Activated CD8-positive, alpha-beta T cell treated with anti-CD3 and anti-CD28 coated beads for 36 hours (primary cell): ENCODE measurements at regions of chr1 and their contacts with region 1.

Region 1: DNA sequence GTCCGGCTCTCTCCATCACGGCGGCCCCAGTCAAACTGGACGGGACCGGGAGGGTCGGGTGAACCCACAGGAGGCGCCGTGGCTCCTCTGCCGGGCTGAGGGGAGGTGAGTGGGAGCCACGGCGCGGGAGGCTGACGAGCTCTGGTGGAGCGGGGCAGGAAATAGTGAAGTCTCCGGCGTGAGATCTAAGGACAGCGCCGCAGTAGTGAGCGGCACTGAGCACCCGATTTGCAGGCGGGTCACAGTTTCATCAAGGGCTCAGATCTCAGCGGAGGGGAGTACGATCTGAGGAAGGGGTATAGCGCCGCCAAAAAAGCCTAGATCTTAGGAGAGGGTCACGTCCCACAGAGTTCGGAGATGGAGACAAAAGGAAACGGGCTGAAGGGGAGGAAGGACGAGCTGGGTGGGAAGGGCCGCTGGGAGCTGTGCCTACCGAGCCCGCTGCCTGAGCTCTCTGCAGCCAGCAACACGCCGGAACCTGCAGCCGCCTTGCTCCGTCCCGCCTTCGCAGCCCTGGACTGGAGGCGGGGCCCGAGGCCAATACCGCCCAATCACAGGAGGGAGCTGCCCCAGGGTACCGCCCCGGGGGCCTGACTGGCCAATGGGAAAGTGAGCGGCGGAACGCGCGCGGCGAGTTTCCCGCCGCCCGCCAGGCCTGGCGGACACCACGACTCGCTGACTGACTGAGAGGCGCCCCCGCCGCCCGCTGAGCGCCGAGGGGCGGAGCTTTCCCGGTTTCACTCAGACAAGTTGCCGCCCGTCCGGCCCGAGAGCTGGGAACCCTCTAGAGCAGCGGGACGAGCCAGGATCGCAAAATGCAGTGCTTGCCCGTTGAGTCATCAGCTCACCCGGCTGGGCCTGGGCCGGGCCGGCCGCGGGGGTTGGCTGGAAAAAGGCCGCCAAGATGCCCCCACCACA is 1.9 kb downstream of the SFN start:
- DNase-seq: peak; percentile 95
- ATAC-seq: peak; percentile 94
- H3K4me3 Mint-ChIP-seq: peak overlapping the region; percentile 89
- H3K27ac Mint-ChIP-seq: peak overlapping the region; percentile 87
- H3K4me1 Mint-ChIP-seq: peaks cover 20% of the 10 kb centered on the region
- H3K27me3 Mint-ChIP-seq: no peaks in the 10 kb centered on the region
- CTCF ChIP-seq: no peak

Region 2: DNA sequence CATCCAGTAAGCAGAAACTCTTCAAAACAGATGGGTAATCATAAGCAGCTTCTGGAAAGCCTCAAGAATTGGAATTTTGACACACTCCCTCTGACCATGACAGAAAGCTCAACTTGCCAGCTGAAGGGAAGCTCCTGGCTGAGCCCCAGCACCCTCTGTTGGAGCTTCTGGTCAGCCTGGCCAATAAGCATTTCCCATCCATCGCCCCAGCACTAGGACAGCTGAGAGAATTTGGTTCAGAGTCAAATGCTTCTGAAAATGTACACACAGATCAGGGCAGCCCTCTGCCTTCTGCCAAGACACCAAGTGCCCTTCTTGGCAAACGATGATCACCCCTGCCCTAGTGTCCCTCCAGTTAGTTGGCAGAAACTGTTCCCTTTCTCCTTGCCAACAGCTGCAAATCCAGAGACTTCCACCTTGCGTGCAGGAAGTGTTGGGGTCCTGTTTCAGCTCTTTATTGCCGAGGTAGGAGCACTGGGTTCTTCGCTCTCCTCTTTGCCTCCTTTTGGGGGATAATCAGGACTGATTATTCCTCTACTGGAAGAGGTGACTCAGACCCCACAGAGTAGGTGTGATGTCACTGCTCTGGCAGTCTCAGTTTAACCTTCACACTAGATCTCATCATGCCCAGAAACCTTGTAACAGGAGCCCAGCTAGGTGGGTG is 65.3 kb before region 1 on chr1:
- CTCF ChIA-PET with region 1: interaction called, 3 read pairs
- POLR2A ChIA-PET with region 1: interaction called, 11 read pairs
- intact Hi-C with region 1: no loop called
- DNase-seq: peak; percentile 62
- ATAC-seq: peak; percentile 80
- H3K4me3 Mint-ChIP-seq: peak overlapping the region; percentile 64
- H3K27ac Mint-ChIP-seq: peak overlapping the region; percentile 96
- H3K4me1 Mint-ChIP-seq: peaks cover 47% of the 10 kb centered on the region
- H3K27me3 Mint-ChIP-seq: no peaks in the 10 kb centered on the region
- CTCF ChIP-seq: no peak

Region 3: DNA sequence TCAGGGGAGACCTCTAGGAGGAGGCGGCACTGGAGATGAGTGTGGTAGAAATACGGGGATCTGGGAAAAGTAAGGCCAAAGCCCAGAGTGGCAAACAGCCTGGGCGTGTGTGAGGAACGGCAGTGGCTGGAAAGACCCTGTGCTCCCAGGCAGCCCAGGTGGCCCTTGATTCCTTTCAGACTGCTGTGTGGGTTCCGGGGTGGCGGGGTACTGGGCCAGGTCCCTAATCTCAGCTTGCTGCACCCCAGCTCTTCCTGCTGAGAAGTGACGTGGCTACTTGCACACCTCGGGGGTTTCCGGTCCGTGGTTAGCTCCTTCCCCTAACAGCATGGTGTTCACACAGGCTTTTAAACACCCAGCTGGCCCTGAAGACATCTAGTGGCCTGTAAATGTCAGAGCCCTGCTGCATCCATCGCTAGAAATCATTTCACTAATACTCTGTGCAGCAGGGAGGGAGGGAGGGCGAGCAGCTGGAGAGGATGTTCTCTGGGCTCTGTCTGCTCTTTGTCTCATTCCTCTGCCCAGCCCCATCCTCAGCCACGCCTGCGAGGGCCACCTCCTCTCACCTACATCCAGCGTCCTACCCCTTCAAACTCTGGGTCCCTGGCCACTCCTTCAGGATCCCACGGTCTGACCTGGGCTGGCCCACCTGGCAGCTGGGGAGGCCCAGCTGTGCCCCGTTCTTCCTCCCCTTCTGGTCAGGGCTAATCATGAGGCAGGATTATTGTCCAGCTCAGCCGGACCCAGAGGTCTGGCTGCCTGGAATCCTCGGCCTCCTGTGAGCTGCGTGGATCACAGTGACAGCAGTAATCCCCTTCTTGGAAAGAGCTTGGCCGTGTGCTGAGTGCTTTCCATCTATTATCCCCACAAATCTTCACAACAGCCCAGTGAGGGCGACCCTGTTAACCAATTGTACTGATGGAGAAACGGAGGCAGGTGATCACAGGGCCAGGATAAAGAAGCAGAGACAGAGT is 31.1 kb before region 1 on chr1:
- CTCF ChIA-PET with region 1: interaction called, 6 read pairs
- POLR2A ChIA-PET with region 1: interaction called, 18 read pairs
- intact Hi-C with region 1: no loop called
- DNase-seq: peak; percentile 95
- ATAC-seq: peak; percentile 94
- H3K4me3 Mint-ChIP-seq: peak overlapping the region; percentile 62
- H3K27ac Mint-ChIP-seq: peak overlapping the region; percentile 98
- H3K4me1 Mint-ChIP-seq: peaks cover 67% of the 10 kb centered on the region
- H3K27me3 Mint-ChIP-seq: no peaks in the 10 kb centered on the region
- CTCF ChIP-seq: no peak

Region 4: DNA sequence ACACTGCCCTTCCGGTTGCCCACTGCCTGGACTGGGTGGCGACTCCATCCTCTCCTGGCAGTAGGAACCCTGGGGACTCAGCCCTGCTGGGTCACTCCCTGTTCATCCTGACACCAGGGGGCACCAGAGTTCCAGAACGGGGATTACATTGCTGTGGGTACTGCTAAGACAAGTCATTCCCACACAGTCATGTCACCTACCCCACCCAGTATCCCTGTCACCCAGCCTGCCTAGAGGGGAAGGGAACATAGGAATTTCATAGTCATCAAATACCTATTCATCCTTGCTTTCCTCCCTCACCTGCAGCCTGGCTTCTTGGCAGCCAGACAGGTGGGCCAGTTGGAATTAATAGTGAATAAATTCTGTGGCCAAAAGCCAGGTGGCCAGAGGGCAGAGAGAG is 11.7 kb before region 1 on chr1:
- CTCF ChIA-PET with region 1: interaction called, 7 read pairs
- POLR2A ChIA-PET with region 1: interaction called, 13 read pairs
- intact Hi-C with region 1: no loop called
- DNase-seq: peak; percentile 82
- ATAC-seq: peak; percentile 72
- H3K4me3 Mint-ChIP-seq: no peak overlapping the region
- H3K27ac Mint-ChIP-seq: no peak overlapping the region
- H3K4me1 Mint-ChIP-seq: no peaks in the 10 kb centered on the region
- H3K27me3 Mint-ChIP-seq: no peaks in the 10 kb centered on the region
- CTCF ChIP-seq: peak; percentile 76

Region 5: GRCh38 chr1:26882696-26883463 is 18.0 kb after region 1 on chr1:
- CTCF ChIA-PET with region 1: interaction called, 19 read pairs
- POLR2A ChIA-PET with region 1: interaction called, 37 read pairs
- intact Hi-C with region 1: no loop called
- DNase-seq: no peak
- ATAC-seq: no peak
- H3K4me3 Mint-ChIP-seq: no peak overlapping the region
- H3K27ac Mint-ChIP-seq: peak overlapping the region; percentile 7
- H3K4me1 Mint-ChIP-seq: peaks cover 3% of the 10 kb centered on the region
- H3K27me3 Mint-ChIP-seq: no peaks in the 10 kb centered on the region
- CTCF ChIP-seq: no peak

Region 6: DNA sequence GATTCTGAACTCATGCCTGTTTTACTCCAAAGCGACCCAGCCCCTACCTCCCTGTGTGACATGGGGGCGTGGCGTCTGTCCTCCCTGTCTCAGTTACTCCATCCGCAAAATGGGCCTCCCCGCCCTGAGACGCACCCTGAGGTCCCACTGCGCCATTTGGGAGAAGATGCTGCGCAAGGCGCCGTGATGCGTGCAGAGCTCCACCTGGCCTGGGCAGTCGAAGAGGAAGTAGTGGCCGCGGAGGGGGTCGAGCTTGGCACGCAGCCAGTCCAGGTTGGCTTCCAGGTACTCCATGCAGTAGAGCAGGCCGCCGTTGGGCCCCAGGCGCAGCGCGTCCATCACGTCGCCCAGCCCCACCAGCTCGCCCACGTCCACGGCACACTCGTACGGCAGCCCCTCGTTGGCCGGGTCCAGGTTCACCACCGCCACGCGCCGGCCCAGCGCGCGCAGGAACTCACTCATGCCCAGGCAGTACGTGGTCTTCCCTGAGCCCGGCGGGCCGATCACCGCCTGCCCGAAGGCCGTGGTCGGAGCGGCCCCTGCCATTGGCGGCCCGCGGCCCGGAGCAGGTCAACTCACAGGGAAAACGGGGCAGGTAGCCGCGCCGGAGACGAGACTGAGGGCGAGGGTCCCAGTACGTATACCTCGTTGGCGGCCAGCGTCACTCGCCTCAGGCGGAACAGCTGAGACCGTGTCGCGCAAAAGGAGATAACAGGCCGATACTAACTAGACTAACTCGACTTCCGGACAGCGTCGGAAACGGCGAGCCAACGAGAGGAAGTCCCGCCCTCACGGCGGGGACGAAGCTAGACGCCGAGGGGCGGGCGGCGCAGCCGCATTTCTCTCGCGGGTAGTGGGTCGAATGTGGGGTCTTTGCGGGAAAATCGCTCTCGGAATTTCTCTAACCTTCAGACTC is 24.9 kb after region 1 on chr1 and contains the start of gene GPN2:
- CTCF ChIA-PET with region 1: interaction called, 19 read pairs
- POLR2A ChIA-PET with region 1: interaction called, 37 read pairs
- intact Hi-C with region 1: no loop called
- DNase-seq: peak; percentile 85
- ATAC-seq: peak; percentile 97
- H3K4me3 Mint-ChIP-seq: peak within 1 kb of the TSS; percentile 97
- H3K27ac Mint-ChIP-seq: peak within 1 kb of the TSS; percentile 94
- H3K4me1 Mint-ChIP-seq: peaks cover 29% of the 10 kb centered on the region
- H3K27me3 Mint-ChIP-seq: no peaks in the 10 kb centered on the region
- CTCF ChIP-seq: no peak
- total RNA-seq, gene GPN2: 45.9 to 47.9 TPM